ENCODE measurements at regions of chr1 and their contacts with region 1.

Region 1: GRCh38 chr1:109041621-109042468 is at the start of gene WDR47:
- DNase-seq: peak; percentile 96
- ATAC-seq: peak; percentile 96
- H3K4me3 ChIP-seq: peak within 1 kb of the TSS; percentile 30 to 93 (median 92)
- H3K4me3 Mint-ChIP-seq: peak within 1 kb of the TSS; percentile 97
- H3K27ac ChIP-seq: peak within 1 kb of the TSS; percentile 67 to 75
- H3K27ac Mint-ChIP-seq: peak within 1 kb of the TSS; percentile 95
- H3K4me1 ChIP-seq: peaks cover 7% of the 10 kb centered on the region in 2 donors
- H3K4me1 Mint-ChIP-seq: peaks cover 16% of the 10 kb centered on the region
- H3K27me3 ChIP-seq: no peaks in the 10 kb centered on the region
- H3K27me3 Mint-ChIP-seq: peaks cover 3% of the 10 kb centered on the region
- CTCF ChIP-seq: no peak
- total RNA-seq, gene WDR47: 17.3 and 21.6 TPM in 2 replicates

Region 2: GRCh38 chr1:108661030-108661620 is 380.7 kb before region 1 on chr1 and contains the start of gene HENMT1:
- CTCF ChIA-PET with region 1: no interaction called
- POLR2A ChIA-PET with region 1: no interaction called
- intact Hi-C with region 1: loop called (anchors 2 kb)
- DNase-seq: peak; percentile 94
- ATAC-seq: peak; percentile 84
- H3K4me3 ChIP-seq: peak within 1 kb of the TSS; percentile 2 to 69 (median 59)
- H3K4me3 Mint-ChIP-seq: peak within 1 kb of the TSS; percentile 88
- H3K27ac ChIP-seq: peak within 1 kb of the TSS; percentile 94 to 95
- H3K27ac Mint-ChIP-seq: peak within 1 kb of the TSS; percentile 96
- H3K4me1 ChIP-seq: peaks cover 8 to 10% of the 10 kb centered on the region in 2 donors
- H3K4me1 Mint-ChIP-seq: peaks cover 12% of the 10 kb centered on the region
- H3K27me3 ChIP-seq: no peaks in the 10 kb centered on the region
- H3K27me3 Mint-ChIP-seq: no peaks in the 10 kb centered on the region
- CTCF ChIP-seq: no peak
- total RNA-seq, gene HENMT1: 6.2 and 6.4 TPM in 2 replicates

Region 3: GRCh38 chr1:108852221-108852975 is 189.4 kb before region 1 on chr1:
- CTCF ChIA-PET with region 1: no interaction called
- POLR2A ChIA-PET with region 1: no interaction called
- intact Hi-C with region 1: no loop called
- DNase-seq: no peak
- ATAC-seq: no peak
- H3K4me3 ChIP-seq: no peak overlapping the region
- H3K4me3 Mint-ChIP-seq: peak overlapping the region; percentile 0
- H3K27ac ChIP-seq: no peak overlapping the region
- H3K27ac Mint-ChIP-seq: no peak overlapping the region
- H3K4me1 ChIP-seq: peaks cover 0 to 3% of the 10 kb centered on the region in 2 donors
- H3K4me1 Mint-ChIP-seq: peaks cover 7% of the 10 kb centered on the region
- H3K27me3 ChIP-seq: peaks cover 0 to 14% (median 2%) of the 10 kb centered on the region in 4 experiments
- H3K27me3 Mint-ChIP-seq: peaks cover 31% of the 10 kb centered on the region
- CTCF ChIP-seq: no peak

Region 4: GRCh38 chr1:108963052-108963686 is 78.7 kb before region 1 on chr1 and contains the start of gene CLCC1:
- CTCF ChIA-PET with region 1: interaction called, 4 read pairs
- POLR2A ChIA-PET with region 1: interaction called, 7 read pairs
- intact Hi-C with region 1: loop called (anchors 1 kb)
- DNase-seq: peak; percentile 97
- ATAC-seq: peak; percentile 91
- H3K4me3 ChIP-seq: peak within 1 kb of the TSS; percentile 56 to 94 (median 76)
- H3K4me3 Mint-ChIP-seq: peak within 1 kb of the TSS; percentile 91
- H3K27ac ChIP-seq: peak within 1 kb of the TSS; percentile 86 to 94
- H3K27ac Mint-ChIP-seq: peak within 1 kb of the TSS; percentile 95
- H3K4me1 ChIP-seq: peaks cover 16 to 17% of the 10 kb centered on the region in 2 donors
- H3K4me1 Mint-ChIP-seq: peaks cover 30% of the 10 kb centered on the region
- H3K27me3 ChIP-seq: no peaks in the 10 kb centered on the region
- H3K27me3 Mint-ChIP-seq: no peaks in the 10 kb centered on the region
- CTCF ChIP-seq: no peak
- total RNA-seq, gene CLCC1: 26.9 and 29.5 TPM in 2 replicates

Region 5: GRCh38 chr1:109075531-109076490 is 34.0 kb after region 1 on chr1 and contains the start of gene TAF13:
- CTCF ChIA-PET with region 1: interaction called, 5 read pairs
- POLR2A ChIA-PET with region 1: interaction called, 3 read pairs
- intact Hi-C with region 1: loop called (anchors 1 kb)
- DNase-seq: peak; percentile 95
- ATAC-seq: peak; percentile 99
- H3K4me3 ChIP-seq: peak within 1 kb of the TSS; percentile 63 to 98 (median 92)
- H3K4me3 Mint-ChIP-seq: peak within 1 kb of the TSS; percentile 99
- H3K27ac ChIP-seq: peak within 1 kb of the TSS; percentile 95 to 98
- H3K27ac Mint-ChIP-seq: peak within 1 kb of the TSS; percentile 97
- H3K4me1 ChIP-seq: peaks cover 12 to 13% of the 10 kb centered on the region in 2 donors
- H3K4me1 Mint-ChIP-seq: peaks cover 17% of the 10 kb centered on the region
- H3K27me3 ChIP-seq: no peaks in the 10 kb centered on the region
- H3K27me3 Mint-ChIP-seq: no peaks in the 10 kb centered on the region
- CTCF ChIP-seq: no peak
- total RNA-seq, gene TAF13: 12.9 and 14.3 TPM in 2 replicates

Region 6: GRCh38 chr1:109090196-109091077 is 48.6 kb after region 1 on chr1 and contains the start of gene TMEM167B:
- CTCF ChIA-PET with region 1: interaction called, 3 read pairs
- POLR2A ChIA-PET with region 1: interaction called, 10 read pairs
- intact Hi-C with region 1: loop called (anchors 1 kb)
- DNase-seq: peak; percentile 93
- ATAC-seq: peak; percentile 89
- H3K4me3 ChIP-seq: peak within 1 kb of the TSS; percentile 88 to 99 (median 93)
- H3K4me3 Mint-ChIP-seq: peak within 1 kb of the TSS; percentile 92
- H3K27ac ChIP-seq: peak within 1 kb of the TSS; percentile 96 to 98
- H3K27ac Mint-ChIP-seq: peak within 1 kb of the TSS; percentile 94
- H3K4me1 ChIP-seq: peaks cover 25 to 28% of the 10 kb centered on the region in 2 donors
- H3K4me1 Mint-ChIP-seq: peaks cover 33% of the 10 kb centered on the region
- H3K27me3 ChIP-seq: no peaks in the 10 kb centered on the region
- H3K27me3 Mint-ChIP-seq: no peaks in the 10 kb centered on the region
- CTCF ChIP-seq: no peak
- total RNA-seq, gene TMEM167B: 40.9 and 44.5 TPM in 2 replicates

Region 7: GRCh38 chr1:110011527-110012041 is 969.7 kb after region 1 on chr1:
- CTCF ChIA-PET with region 1: no interaction called
- POLR2A ChIA-PET with region 1: no interaction called
- intact Hi-C with region 1: loop called (anchors 10 kb)
- DNase-seq: peak; percentile 92
- ATAC-seq: peak; percentile 93
- H3K4me3 ChIP-seq: peak overlapping the region in 3 of 5 experiments; percentile 29 to 37 (median 34)
- H3K4me3 Mint-ChIP-seq: peak overlapping the region; percentile 82
- H3K27ac ChIP-seq: peak overlapping the region; percentile 93 to 94
- H3K27ac Mint-ChIP-seq: peak overlapping the region; percentile 98
- H3K4me1 ChIP-seq: peaks cover 25 to 27% of the 10 kb centered on the region in 2 donors
- H3K4me1 Mint-ChIP-seq: peaks cover 33% of the 10 kb centered on the region
- H3K27me3 ChIP-seq: no peaks in the 10 kb centered on the region
- H3K27me3 Mint-ChIP-seq: no peaks in the 10 kb centered on the region
- CTCF ChIP-seq: peak; percentile 79

Measured in B cell (primary cell).